ENCODE measurements at regions of chr10 and their contacts with region 1.

Region 1: DNA sequence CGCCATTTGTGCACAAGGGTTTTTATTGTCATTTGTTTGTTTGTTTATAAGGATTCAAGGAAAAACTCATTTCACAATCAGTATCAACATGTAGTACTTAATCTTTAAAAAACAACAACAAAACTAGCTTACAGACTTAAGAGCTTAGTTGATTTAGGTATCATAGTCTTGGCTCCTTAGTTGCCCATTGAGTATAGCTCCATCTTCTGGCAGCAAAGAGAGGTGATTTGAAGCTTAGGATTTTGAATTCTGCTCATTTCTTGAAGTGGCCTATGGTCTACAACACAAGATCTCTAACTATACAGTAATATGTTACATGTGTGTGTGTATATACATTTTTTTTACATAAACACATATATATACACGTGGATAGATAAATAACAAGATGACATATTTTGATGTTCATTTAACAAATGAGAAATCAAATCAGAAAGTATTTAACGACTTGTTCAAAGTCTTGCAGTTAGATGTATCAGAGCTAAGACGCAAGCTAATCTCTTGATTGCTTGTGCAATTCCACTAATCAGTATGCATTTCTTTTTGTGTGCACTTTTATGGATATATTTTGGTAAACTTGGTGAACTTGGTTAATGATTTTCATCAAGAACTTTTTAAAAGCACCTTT is 307.3 kb downstream of the CAMK1D start:
- DNase-seq: peak in 4 of 5 donors; percentile 56 to 64 (median 60)
- H3K4me3 ChIP-seq: no peak overlapping the region
- H3K4me3 Mint-ChIP-seq: no peak overlapping the region
- H3K27ac ChIP-seq: no peak overlapping the region
- H3K27ac Mint-ChIP-seq: no peak overlapping the region
- H3K4me1 ChIP-seq: no peaks in the 10 kb centered on the region
- H3K4me1 Mint-ChIP-seq: peaks cover 2 to 15% (median 7%) of the 10 kb centered on the region in 4 donors
- H3K27me3 ChIP-seq: no peaks in the 10 kb centered on the region
- H3K27me3 Mint-ChIP-seq: no peaks in the 10 kb centered on the region

Region 2: GRCh38 chr10:12214763-12215218 is 441.8 kb before region 1 on chr10:
- CTCF ChIA-PET with region 1: interaction called, 36 read pairs
- POLR2A ChIA-PET with region 1: no interaction called
- intact Hi-C with region 1: loop called (anchors 1 kb)
- DNase-seq: peak; percentile 45 to 54 (median 53)
- H3K4me3 ChIP-seq: no peak overlapping the region
- H3K4me3 Mint-ChIP-seq: peak overlapping the region; percentile 48 to 79 (median 68)
- H3K27ac ChIP-seq: peak overlapping the region; percentile 22
- H3K27ac Mint-ChIP-seq: peak overlapping the region; percentile 45 to 94 (median 89)
- H3K4me1 ChIP-seq: peaks cover 6% of the 10 kb centered on the region
- H3K4me1 Mint-ChIP-seq: peaks cover 10 to 20% (median 16%) of the 10 kb centered on the region in 4 donors
- H3K27me3 ChIP-seq: no peaks in the 10 kb centered on the region
- H3K27me3 Mint-ChIP-seq: no peaks in the 10 kb centered on the region

Region 3: DNA sequence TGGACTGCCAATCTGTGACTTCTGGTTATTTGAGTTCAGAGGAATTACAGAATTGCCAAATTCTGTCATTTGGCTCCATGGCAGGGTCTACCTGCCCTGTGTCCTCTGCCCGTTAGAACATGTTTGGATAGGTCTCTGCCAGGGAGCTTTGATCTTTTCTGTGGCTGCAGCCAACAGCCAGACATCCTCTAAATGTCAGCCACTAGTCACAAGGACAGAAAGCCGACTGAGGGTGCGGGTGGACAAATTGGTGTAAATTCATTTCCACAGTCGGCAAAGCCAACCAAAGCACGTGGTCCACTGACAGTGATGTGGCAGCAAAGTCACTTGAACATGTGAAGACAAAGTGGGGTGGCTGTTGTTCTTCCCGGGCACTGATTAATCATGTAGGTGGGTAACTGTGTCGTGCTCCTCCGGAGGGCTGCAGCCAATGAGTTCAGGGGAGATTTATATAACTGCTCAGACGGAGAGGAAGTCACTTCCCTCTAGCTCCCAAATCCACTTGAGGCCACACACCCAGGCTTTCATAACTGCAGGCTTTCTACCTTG is 334.0 kb before region 1 on chr10:
- CTCF ChIA-PET with region 1: interaction called, 19 read pairs
- POLR2A ChIA-PET with region 1: no interaction called
- intact Hi-C with region 1: no loop called
- DNase-seq: no peak
- H3K4me3 ChIP-seq: no peak overlapping the region
- H3K4me3 Mint-ChIP-seq: peak overlapping the region in 2 of 8 donors; percentile 0 to 36
- H3K27ac ChIP-seq: no peak overlapping the region
- H3K27ac Mint-ChIP-seq: peak overlapping the region in 3 of 7 donors; percentile 9 to 84 (median 72)
- H3K4me1 ChIP-seq: no peaks in the 10 kb centered on the region
- H3K4me1 Mint-ChIP-seq: peaks cover 5 to 14% (median 8%) of the 10 kb centered on the region in 4 donors
- H3K27me3 ChIP-seq: no peaks in the 10 kb centered on the region
- H3K27me3 Mint-ChIP-seq: no peaks in the 10 kb centered on the region

Region 4: DNA sequence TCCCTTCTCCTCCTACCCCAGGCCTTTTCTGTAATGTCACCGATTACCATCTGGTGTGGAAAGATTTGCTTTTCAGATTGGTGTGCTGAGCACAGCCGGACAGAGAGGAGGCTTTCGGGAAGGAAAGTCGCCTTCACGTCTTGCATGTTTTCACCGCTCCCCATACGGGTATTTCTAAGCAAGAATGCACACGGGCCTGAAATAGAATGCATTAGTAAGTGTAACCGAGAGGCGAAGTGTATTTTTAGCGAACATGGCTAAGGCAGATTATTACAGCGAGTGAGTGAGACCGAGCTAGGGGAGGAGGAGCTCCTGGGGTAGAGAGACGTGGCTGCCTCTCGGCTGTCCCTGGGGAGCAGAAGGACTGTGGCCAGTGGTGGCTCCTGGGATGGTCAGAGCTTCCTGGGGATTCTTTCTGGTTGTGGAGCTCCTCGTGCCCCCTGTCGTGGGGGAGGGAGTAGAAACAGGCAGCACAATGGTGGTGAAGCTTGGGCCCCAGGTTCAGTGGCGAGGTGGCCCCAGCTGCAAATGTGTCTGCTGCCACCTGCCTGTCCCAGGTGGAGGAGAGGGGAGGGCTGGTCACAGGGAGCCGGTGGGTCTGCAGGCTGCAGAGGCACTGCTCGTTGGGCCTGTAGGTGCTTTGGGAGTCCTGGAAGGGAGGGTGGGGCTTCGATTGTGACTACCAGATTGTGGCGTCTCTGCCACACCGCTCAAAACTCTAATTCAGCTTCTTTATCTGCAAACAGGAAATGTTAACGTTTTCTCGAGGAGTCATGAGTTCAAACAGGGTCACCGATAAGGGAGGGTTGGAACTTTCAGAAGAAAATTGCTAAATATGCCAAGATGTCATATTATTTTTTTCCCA is 171.5 kb before region 1 on chr10:
- CTCF ChIA-PET with region 1: interaction called, 13 read pairs
- POLR2A ChIA-PET with region 1: no interaction called
- intact Hi-C with region 1: no loop called
- DNase-seq: peak in 4 of 5 donors; percentile 11 to 22 (median 14)
- H3K4me3 ChIP-seq: no peak overlapping the region
- H3K4me3 Mint-ChIP-seq: peak overlapping the region in 4 of 8 donors; percentile 2 to 51 (median 48)
- H3K27ac ChIP-seq: no peak overlapping the region
- H3K27ac Mint-ChIP-seq: peak overlapping the region in 6 of 7 donors; percentile 25 to 78 (median 64)
- H3K4me1 ChIP-seq: peaks cover 13% of the 10 kb centered on the region
- H3K4me1 Mint-ChIP-seq: peaks cover 20 to 37% (median 27%) of the 10 kb centered on the region in 4 donors
- H3K27me3 ChIP-seq: no peaks in the 10 kb centered on the region
- H3K27me3 Mint-ChIP-seq: no peaks in the 10 kb centered on the region

Region 5: DNA sequence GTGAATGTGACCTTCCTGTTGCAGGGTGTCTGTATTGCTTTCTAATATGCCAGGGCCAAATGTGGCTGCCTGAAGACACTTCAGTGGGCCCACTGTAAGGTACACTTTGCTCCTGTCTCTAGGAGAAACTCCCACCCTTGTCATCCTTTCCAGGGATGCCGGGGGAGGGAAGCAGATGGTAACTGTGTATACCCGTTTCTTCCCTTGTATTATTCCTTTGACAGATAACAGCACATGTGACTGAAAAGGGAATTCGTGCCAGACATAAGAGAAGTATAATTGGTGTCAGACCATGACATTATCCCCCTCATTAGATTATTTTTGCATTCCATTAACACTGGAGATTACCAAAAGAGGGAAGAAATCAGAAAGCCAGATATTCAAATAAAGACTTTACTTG is 10.4 kb after region 1 on chr10:
- CTCF ChIA-PET with region 1: interaction called, 20 read pairs
- POLR2A ChIA-PET with region 1: no interaction called
- intact Hi-C with region 1: no loop called
- DNase-seq: no peak
- H3K4me3 ChIP-seq: no peak overlapping the region
- H3K4me3 Mint-ChIP-seq: no peak overlapping the region
- H3K27ac ChIP-seq: no peak overlapping the region
- H3K27ac Mint-ChIP-seq: peak overlapping the region in 1 of 7 donors; percentile 46
- H3K4me1 ChIP-seq: no peaks in the 10 kb centered on the region
- H3K4me1 Mint-ChIP-seq: no peaks in the 10 kb centered on the region
- H3K27me3 ChIP-seq: no peaks in the 10 kb centered on the region
- H3K27me3 Mint-ChIP-seq: no peaks in the 10 kb centered on the region

Region 6: GRCh38 chr10:13001041-13001886 is 344.6 kb after region 1 on chr10 and contains the start of gene CCDC3:
- CTCF ChIA-PET with region 1: no interaction called
- POLR2A ChIA-PET with region 1: no interaction called
- intact Hi-C with region 1: no loop called
- DNase-seq: no peak
- H3K4me3 ChIP-seq: no peak within 1 kb of the TSS
- H3K4me3 Mint-ChIP-seq: peak within 1 kb of the TSS in 6 of 8 donors; percentile 32 to 58 (median 46)
- H3K27ac ChIP-seq: no peak within 1 kb of the TSS
- H3K27ac Mint-ChIP-seq: peak within 1 kb of the TSS in 1 of 7 donors; percentile 30
- H3K4me1 ChIP-seq: no peaks in the 10 kb centered on the region
- H3K4me1 Mint-ChIP-seq: peaks cover 3 to 10% (median 6%) of the 10 kb centered on the region in 4 donors
- H3K27me3 ChIP-seq: peaks cover 10% of the 10 kb centered on the region
- H3K27me3 Mint-ChIP-seq: peaks cover 49 to 50% of the 10 kb centered on the region in 2 donors
- total RNA-seq, gene CCDC3: not detected